ENCODE measurements at regions of chrX and their contacts with region 1.

Region 1: GRCh38 chrX:79161655-79162054 is 17.2 kb downstream of the GPR174 start:
- DNase-seq: no peak
- ATAC-seq: no peak
- H3K4me3 ChIP-seq: no peak overlapping the region
- H3K27ac ChIP-seq: no peak overlapping the region
- H3K4me1 ChIP-seq: no peaks in the 10 kb centered on the region
- H3K27me3 ChIP-seq: no peaks in the 10 kb centered on the region
- CTCF ChIP-seq: no peak
- POLR2A ChIP-seq: no peak
- RAD21 ChIP-seq: no peak

Region 2: GRCh38 chrX:78573630-78574029 is 588.0 kb before region 1 on chrX:
- CTCF ChIA-PET with region 1: no interaction called
- POLR2A ChIA-PET with region 1: no interaction called
- dilution Hi-C with region 1: no loop called
- in situ Hi-C with region 1: no loop called
- intact Hi-C with region 1: loop called (anchors 5 kb)
- DNase-seq: no peak
- ATAC-seq: no peak
- H3K4me3 ChIP-seq: no peak overlapping the region
- H3K27ac ChIP-seq: no peak overlapping the region
- H3K4me1 ChIP-seq: no peaks in the 10 kb centered on the region
- H3K27me3 ChIP-seq: no peaks in the 10 kb centered on the region
- CTCF ChIP-seq: no peak
- POLR2A ChIP-seq: no peak
- RAD21 ChIP-seq: no peak

Region 3: DNA sequence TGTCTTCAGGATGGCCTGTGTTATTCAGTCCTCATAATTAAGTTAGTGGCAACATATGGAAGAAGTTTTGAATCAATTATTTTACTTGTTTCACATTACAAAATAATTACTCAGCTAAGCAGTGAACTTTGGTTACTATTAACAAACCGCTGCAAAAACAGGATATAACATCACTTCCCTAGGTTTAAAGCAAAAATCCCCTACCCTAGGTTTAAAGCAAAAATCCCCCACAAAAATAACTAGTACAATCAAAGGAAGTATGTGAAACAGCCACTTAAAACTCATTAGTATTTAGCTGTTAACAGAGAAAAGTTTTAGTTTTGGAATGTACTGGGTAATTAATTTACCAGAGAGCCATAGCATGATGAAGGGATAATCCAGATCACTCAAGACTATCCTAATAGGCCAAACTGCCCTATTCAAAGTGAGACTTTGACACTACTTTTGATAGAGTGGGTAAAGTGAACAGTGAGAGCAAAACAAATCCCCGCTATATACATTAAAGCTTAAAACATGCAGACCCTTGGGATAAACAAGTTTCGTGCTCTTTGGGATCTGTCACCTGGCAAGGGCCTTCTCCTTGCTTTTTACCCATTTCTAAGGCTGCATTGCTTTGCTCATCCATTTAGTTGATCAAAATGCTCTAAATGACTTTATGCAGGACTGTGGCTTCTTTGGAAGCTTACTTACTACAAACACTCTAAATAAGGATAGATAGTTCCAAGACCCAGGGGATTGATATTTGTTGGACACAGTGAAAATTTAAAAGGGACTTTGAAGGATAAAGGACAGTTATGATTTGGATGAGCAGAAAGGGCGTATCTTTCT is 53.5 kb before region 1 on chrX:
- CTCF ChIA-PET with region 1: no interaction called
- POLR2A ChIA-PET with region 1: no interaction called
- dilution Hi-C with region 1: no loop called
- in situ Hi-C with region 1: no loop called
- intact Hi-C with region 1: loop called (anchors 1 kb)
- DNase-seq: no peak
- ATAC-seq: no peak
- H3K4me3 ChIP-seq: no peak overlapping the region
- H3K27ac ChIP-seq: no peak overlapping the region
- H3K4me1 ChIP-seq: no peaks in the 10 kb centered on the region
- H3K27me3 ChIP-seq: no peaks in the 10 kb centered on the region
- CTCF ChIP-seq: no peak
- POLR2A ChIP-seq: no peak
- RAD21 ChIP-seq: no peak

Region 4: DNA sequence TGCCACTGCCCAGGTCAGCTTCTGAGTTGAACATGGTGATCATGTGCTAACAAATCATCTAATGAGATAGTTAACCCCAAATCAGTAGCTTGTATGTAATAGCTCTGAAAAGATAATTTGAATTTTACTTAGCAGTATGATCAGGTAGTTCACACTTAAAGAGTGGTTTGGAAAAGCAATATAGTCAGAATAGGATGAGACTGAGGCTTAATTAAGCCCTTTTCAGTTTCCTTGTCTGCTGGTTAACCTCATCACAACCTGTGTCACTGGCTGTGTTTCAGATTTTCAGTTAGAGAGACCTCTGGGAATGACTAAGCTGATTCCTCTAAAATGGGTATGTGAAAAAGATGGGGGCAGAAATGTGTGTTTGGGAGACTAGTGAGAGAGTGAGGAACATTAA is 21.0 kb after region 1 on chrX:
- CTCF ChIA-PET with region 1: no interaction called
- POLR2A ChIA-PET with region 1: no interaction called
- dilution Hi-C with region 1: no loop called
- in situ Hi-C with region 1: no loop called
- intact Hi-C with region 1: no loop called
- DNase-seq: no peak
- ATAC-seq: no peak
- H3K4me3 ChIP-seq: no peak overlapping the region
- H3K27ac ChIP-seq: no peak overlapping the region
- H3K4me1 ChIP-seq: no peaks in the 10 kb centered on the region
- H3K27me3 ChIP-seq: no peaks in the 10 kb centered on the region
- CTCF ChIP-seq: no peak
- POLR2A ChIP-seq: no peak
- RAD21 ChIP-seq: no peak

Measured in IMR-90 (cell line).